Activated naive CD8-positive, alpha-beta T cell treated with anti-CD3 and anti-CD28 coated beads, Interleukin-2, amount 10 ng/mL, durations not matched to agents 7 days and 5 days (primary cell): ENCODE measurements at regions of chr14 and their contacts with region 1.

Region 1: DNA sequence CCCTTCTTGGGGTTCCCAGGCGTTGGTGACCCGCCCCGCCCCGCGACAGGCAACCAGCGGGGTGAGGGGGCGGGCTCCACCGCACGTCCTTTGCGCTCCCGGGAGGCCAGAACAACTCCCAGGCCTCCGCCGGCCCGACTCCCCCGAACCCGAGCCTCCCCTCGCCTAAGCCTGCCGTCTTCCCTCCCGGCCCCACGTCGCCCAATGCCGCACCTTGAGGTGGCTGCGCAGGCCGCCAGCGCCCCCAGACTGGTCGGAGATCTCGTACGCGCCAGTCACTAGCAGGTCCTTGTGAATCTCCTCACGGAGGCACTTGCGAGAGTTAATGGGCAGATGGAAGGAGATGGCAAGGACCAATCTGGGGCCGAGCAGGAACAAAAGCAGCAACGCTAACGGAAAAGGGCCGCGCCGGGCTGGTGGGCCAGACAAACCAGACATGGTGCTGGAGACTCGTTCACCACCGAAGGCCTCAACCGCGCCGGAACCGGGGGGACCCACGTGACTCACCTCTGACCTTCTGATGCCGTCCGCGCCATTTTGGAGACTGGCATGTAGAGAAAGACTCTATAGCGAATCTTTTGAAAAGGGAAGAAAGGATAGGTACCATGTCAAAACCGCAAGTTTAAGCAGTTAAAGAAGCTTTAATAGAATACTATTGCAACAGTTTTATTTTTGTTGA is at the start of gene TMED10:
- DNase-seq: peak; percentile 91
- ATAC-seq: peak; percentile 77
- H3K4me3 Mint-ChIP-seq: peak within 1 kb of the TSS; percentile 95
- H3K27ac Mint-ChIP-seq: peak within 1 kb of the TSS; percentile 98
- H3K4me1 Mint-ChIP-seq: peaks cover 23% of the 10 kb centered on the region
- H3K27me3 Mint-ChIP-seq: peaks cover 1% of the 10 kb centered on the region
- total RNA-seq, gene TMED10: 149 to 154 TPM

Region 2: DNA sequence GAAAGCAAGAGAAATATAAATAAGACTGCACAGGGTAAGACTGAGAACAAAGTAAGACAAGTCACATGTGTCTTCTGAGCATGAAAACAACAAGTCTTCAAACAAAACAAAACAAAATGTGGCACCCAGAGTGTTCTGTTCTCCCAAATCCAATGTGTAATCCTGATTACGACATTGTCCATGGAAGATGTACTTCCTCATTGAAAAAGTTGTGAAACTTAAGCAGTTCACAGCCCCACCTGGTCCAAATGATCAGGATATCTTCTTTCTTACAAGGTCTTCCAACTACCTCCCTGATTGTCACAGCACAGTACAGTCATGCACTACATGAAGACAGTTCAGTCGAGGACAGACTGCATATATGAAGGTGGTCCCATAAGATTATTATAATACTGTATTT is 26.1 kb before region 1 on chr14:
- POLR2A ChIA-PET with region 1: no interaction called
- DNase-seq: no peak
- ATAC-seq: no peak
- H3K4me3 Mint-ChIP-seq: no peak overlapping the region
- H3K27ac Mint-ChIP-seq: no peak overlapping the region
- H3K4me1 Mint-ChIP-seq: peaks cover 35% of the 10 kb centered on the region
- H3K27me3 Mint-ChIP-seq: no peaks in the 10 kb centered on the region

Region 3: GRCh38 chr14:75249251-75249957 is 73.1 kb after region 1 on chr14:
- POLR2A ChIA-PET with region 1: interaction called, 18 read pairs
- DNase-seq: peak; percentile 75
- ATAC-seq: peak; percentile 85
- H3K4me3 Mint-ChIP-seq: peak overlapping the region; percentile 43
- H3K27ac Mint-ChIP-seq: peak overlapping the region; percentile 87
- H3K4me1 Mint-ChIP-seq: peaks cover 49% of the 10 kb centered on the region
- H3K27me3 Mint-ChIP-seq: peaks cover 15% of the 10 kb centered on the region